ENCODE measurements at regions of chr20 and their contacts with region 1.

Region 1: GRCh38 chr20:44552950-44553908 is 29.1 kb upstream of the PKIG start:
- DNase-seq: no peak
- H3K4me3 Mint-ChIP-seq: peak overlapping the region; percentile 6
- H3K27ac Mint-ChIP-seq: peak overlapping the region; percentile 72
- H3K4me1 Mint-ChIP-seq: peaks cover 22% of the 10 kb centered on the region
- H3K27me3 Mint-ChIP-seq: no peaks in the 10 kb centered on the region

Region 2: DNA sequence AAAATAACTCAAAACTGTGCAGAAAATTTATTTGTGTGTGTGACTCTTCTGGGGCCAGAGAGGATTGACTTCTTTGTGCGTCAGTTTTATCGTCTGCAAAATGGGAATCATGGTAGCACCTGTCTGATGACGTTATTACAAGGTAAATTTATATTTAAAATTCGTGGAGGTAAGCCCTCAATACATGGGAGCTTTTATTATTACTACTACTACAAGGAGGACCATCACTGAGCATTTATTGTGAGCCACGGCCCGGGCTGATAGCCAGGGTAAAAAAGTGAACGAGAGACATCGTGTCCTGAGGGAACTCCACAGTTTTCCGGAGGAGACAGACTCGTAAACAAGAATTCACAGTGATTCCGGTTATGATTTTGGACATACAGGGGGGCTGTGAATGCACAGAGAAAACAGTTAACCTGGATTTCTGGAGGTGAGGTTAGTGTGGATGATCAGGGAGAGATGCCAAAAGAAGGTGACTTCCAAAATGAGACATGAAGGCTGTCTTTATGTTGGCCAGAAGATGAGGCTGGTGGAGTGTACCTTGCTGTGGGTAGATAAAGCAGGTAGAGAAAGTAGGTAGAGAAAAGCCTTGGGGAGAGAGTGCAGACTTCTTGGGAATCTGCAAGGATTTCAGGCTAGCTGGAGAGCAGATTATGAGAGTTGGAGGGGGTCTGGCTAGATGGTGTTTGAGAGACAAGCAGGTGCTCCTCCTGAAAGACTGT is 20.8 kb before region 1 on chr20:
- intact Hi-C with region 1: loop called (anchors 1 kb)
- DNase-seq: no peak
- H3K4me3 Mint-ChIP-seq: no peak overlapping the region
- H3K27ac Mint-ChIP-seq: no peak overlapping the region
- H3K4me1 Mint-ChIP-seq: no peaks in the 10 kb centered on the region
- H3K27me3 Mint-ChIP-seq: peaks cover 5% of the 10 kb centered on the region

Region 3: GRCh38 chr20:44576297-44576696 is 23.1 kb after region 1 on chr20:
- intact Hi-C with region 1: loop called (anchors 2 kb)
- DNase-seq: no peak
- H3K4me3 Mint-ChIP-seq: no peak overlapping the region
- H3K27ac Mint-ChIP-seq: peak overlapping the region; percentile 59
- H3K4me1 Mint-ChIP-seq: peaks cover 27% of the 10 kb centered on the region
- H3K27me3 Mint-ChIP-seq: no peaks in the 10 kb centered on the region